HepG2 (cell line): ENCODE measurements at regions of chr9 and their contacts with region 1.

Region 1: GRCh38 chr9:101458955-101459631 is 23.5 kb upstream of the ALDOB start:
- DNase-seq: peak; percentile 86
- ATAC-seq: peak; percentile 95
- H3K4me3 ChIP-seq: no peak overlapping the region
- H3K27ac ChIP-seq: no peak overlapping the region
- H3K4me1 ChIP-seq: peaks cover 52% of the 10 kb centered on the region
- H3K27me3 ChIP-seq: no peaks in the 10 kb centered on the region
- CTCF ChIP-seq: peak; percentile 91
- EP300 ChIP-seq: no peak
- POLR2A ChIP-seq: no peak
- RAD21 ChIP-seq: peak; percentile 80

Region 2: GRCh38 chr9:100714372-100715099 is 744.6 kb before region 1 on chr9:
- CTCF ChIA-PET with region 1: no interaction called
- POLR2A ChIA-PET with region 1: no interaction called
- in situ Hi-C with region 1: no loop called
- intact Hi-C with region 1: loop called (anchors 5 kb)
- DNase-seq: peak; percentile 48
- ATAC-seq: peak; percentile 91
- H3K4me3 ChIP-seq: no peak overlapping the region
- H3K27ac ChIP-seq: no peak overlapping the region
- H3K4me1 ChIP-seq: no peaks in the 10 kb centered on the region
- H3K27me3 ChIP-seq: no peaks in the 10 kb centered on the region
- CTCF ChIP-seq: peak; percentile 82
- EP300 ChIP-seq: no peak
- POLR2A ChIP-seq: no peak
- RAD21 ChIP-seq: peak; percentile 37; the same call in 1 of the 2 replicates

Region 3: GRCh38 chr9:101274971-101275768 is 183.9 kb before region 1 on chr9:
- CTCF ChIA-PET with region 1: no interaction called
- POLR2A ChIA-PET with region 1: no interaction called
- in situ Hi-C with region 1: loop called (anchors 5 kb)
- intact Hi-C with region 1: no loop called
- DNase-seq: no peak
- ATAC-seq: no peak
- H3K4me3 ChIP-seq: no peak overlapping the region
- H3K27ac ChIP-seq: no peak overlapping the region
- H3K4me1 ChIP-seq: 0 out of 2 replicates have a peak, but pooled peaks cover 12% of the 10 kb centered on the region
- H3K27me3 ChIP-seq: no peaks in the 10 kb centered on the region
- CTCF ChIP-seq: no peak
- EP300 ChIP-seq: no peak
- POLR2A ChIP-seq: no peak
- RAD21 ChIP-seq: no peak

Region 4: GRCh38 chr9:101418518-101419430 is 40.3 kb before region 1 on chr9:
- CTCF ChIA-PET with region 1: no interaction called
- POLR2A ChIA-PET with region 1: no interaction called
- in situ Hi-C with region 1: no loop called
- intact Hi-C with region 1: loop called (anchors 1 kb)
- DNase-seq: no peak
- ATAC-seq: no peak; the same call in 2 of the 3 replicates
- H3K4me3 ChIP-seq: no peak overlapping the region
- H3K27ac ChIP-seq: no peak overlapping the region
- H3K4me1 ChIP-seq: peaks cover 74% of the 10 kb centered on the region
- H3K27me3 ChIP-seq: no peaks in the 10 kb centered on the region
- CTCF ChIP-seq: no peak
- EP300 ChIP-seq: no peak
- POLR2A ChIP-seq: no peak
- RAD21 ChIP-seq: no peak

Region 5: GRCh38 chr9:101516655-101517054 is 57.6 kb after region 1 on chr9:
- CTCF ChIA-PET with region 1: no interaction called
- POLR2A ChIA-PET with region 1: no interaction called
- in situ Hi-C with region 1: no loop called
- intact Hi-C with region 1: no loop called
- DNase-seq: no peak
- ATAC-seq: no peak
- H3K4me3 ChIP-seq: no peak overlapping the region
- H3K27ac ChIP-seq: no peak overlapping the region
- H3K4me1 ChIP-seq: no peaks in the 10 kb centered on the region
- H3K27me3 ChIP-seq: no peaks in the 10 kb centered on the region
- CTCF ChIP-seq: no peak
- EP300 ChIP-seq: no peak
- POLR2A ChIP-seq: no peak
- RAD21 ChIP-seq: no peak

Region 6: GRCh38 chr9:101566904-101567724 is 108.0 kb after region 1 on chr9:
- CTCF ChIA-PET with region 1: interaction called, 8 read pairs
- POLR2A ChIA-PET with region 1: no interaction called
- in situ Hi-C with region 1: no loop called
- intact Hi-C with region 1: loop called (anchors 1 kb)
- DNase-seq: peak; percentile 48
- ATAC-seq: peak; percentile 76
- H3K4me3 ChIP-seq: no peak overlapping the region
- H3K27ac ChIP-seq: no peak overlapping the region
- H3K4me1 ChIP-seq: no peaks in the 10 kb centered on the region
- H3K27me3 ChIP-seq: no peaks in the 10 kb centered on the region
- CTCF ChIP-seq: peak; percentile 58
- EP300 ChIP-seq: no peak
- POLR2A ChIP-seq: no peak
- RAD21 ChIP-seq: no peak